Stomach (tissue), 19 donors: ENCODE measurements at regions of chr13 and their contacts with region 1.

Region 1: GRCh38 chr13:43085545-43085944 is 62.2 kb downstream of the DNAJC15 start:
- DNase-seq: peak in 1 of 2 donors; percentile 61
- H3K4me3 ChIP-seq: no peak overlapping the region
- H3K27ac ChIP-seq: no peak overlapping the region
- H3K4me1 ChIP-seq: peaks cover 6 to 27% (median 11%) of the 10 kb centered on the region in 4 donors
- H3K27me3 ChIP-seq: no peaks in the 10 kb centered on the region
- CTCF ChIP-seq: peak in 5 of 7 experiments; percentile 43 to 77 (median 56)
- EP300 ChIP-seq: no peak
- POLR2A ChIP-seq: no peak

Region 2: DNA sequence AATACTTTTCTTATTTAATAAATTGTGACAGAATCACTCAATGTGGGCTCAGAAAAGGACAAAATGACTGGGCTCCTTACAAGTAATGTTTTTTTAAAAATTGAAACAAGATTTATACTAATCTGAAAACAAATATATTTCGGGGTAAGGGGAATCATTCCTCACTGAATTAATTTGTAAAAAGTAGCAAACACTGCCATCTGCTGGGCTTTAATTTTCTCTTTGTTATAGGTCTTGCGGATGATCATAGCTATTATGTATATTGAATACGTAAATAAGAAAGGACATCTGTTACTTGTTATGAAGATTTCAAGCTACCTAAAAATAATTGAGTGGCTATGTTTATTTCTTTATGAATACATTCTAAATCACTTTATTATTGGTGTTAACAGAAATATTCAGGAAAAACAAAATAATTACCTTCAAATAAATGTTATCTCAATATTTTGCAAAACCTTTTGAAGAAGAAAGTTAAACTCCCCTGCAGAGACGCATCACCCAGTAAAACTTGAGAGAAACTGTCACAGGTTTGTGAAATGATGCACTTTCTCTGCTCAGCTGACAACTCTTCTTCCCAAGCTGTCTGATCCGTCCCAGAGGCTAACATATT is 719.0 kb after region 1 on chr13:
- intact Hi-C with region 1: loop called (anchors 10 kb)
- DNase-seq: peak in 1 of 2 donors; percentile 85
- H3K4me3 ChIP-seq: no peak overlapping the region
- H3K27ac ChIP-seq: no peak overlapping the region
- H3K4me1 ChIP-seq: peaks cover 0 to 10% (median 7%) of the 10 kb centered on the region in 4 donors
- H3K27me3 ChIP-seq: no peaks in the 10 kb centered on the region
- CTCF ChIP-seq: peak in 5 of 7 experiments; percentile 5 to 57 (median 35)
- EP300 ChIP-seq: no peak
- POLR2A ChIP-seq: no peak